Head of caudate nucleus (tissue), 42 donors: ENCODE measurements at regions of chr14 and their contacts with region 1.

Region 1: GRCh38 chr14:36661756-36662498 is at the start of gene PAX9:
- DNase-seq: peak in 9 of 42 donors; percentile 14 to 59 (median 35)

Region 2: GRCh38 chr14:36505181-36505815 is 156.6 kb before region 1 on chr14:
- intact Hi-C with region 1: no loop called
- DNase-seq: no peak

Region 3: GRCh38 chr14:36520601-36521525 is 141.1 kb before region 1 on chr14:
- intact Hi-C with region 1: loop called (anchors 10 kb)
- DNase-seq: peak in 3 of 42 donors; percentile 29 to 51 (median 48)

Region 4: DNA sequence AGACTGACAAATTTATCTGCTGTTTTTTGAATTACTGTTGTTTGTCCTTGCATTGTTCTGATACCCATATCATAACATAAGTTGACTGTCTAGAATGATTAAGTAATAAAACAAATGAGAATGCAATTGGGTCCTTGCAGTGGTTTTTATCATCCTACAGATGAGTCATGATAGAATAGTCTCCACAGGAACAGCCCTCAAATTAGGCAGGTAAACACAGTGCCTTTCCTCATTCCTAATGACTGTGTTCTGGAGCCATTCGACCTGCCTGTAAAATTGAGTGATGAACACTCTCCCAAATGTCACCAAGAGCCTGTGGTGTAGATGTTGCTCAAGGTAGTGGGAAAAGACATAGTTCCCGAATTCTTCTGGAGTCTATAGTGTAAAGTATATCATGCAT is 91.9 kb before region 1 on chr14:
- intact Hi-C with region 1: no loop called
- DNase-seq: no peak

Region 5: DNA sequence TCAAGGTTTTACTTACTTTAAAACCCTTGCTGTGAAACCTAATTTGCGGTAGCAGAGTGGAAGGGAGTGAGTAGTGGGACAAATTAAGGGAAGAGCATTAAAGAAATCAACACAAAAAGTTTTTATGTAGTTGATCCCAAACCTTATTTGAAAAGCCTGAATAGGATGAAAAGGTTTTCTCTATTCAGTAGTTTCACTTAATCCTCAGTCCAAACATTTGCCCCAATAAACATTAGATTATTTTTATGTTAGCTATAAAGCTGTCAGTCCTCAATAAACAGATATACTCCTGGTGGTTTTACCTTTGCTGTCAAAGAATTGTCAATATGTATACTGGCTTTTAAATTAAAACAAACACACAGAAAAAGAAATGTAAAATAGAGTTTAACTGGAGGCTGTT is 135.7 kb after region 1 on chr14:
- intact Hi-C with region 1: no loop called
- DNase-seq: no peak